Activated CD4-positive, alpha-beta memory T cell treated with anti-CD3 and anti-CD28 coated beads for 36 hours (primary cell): ENCODE measurements at regions of chr13 and their contacts with region 1.

Region 1: DNA sequence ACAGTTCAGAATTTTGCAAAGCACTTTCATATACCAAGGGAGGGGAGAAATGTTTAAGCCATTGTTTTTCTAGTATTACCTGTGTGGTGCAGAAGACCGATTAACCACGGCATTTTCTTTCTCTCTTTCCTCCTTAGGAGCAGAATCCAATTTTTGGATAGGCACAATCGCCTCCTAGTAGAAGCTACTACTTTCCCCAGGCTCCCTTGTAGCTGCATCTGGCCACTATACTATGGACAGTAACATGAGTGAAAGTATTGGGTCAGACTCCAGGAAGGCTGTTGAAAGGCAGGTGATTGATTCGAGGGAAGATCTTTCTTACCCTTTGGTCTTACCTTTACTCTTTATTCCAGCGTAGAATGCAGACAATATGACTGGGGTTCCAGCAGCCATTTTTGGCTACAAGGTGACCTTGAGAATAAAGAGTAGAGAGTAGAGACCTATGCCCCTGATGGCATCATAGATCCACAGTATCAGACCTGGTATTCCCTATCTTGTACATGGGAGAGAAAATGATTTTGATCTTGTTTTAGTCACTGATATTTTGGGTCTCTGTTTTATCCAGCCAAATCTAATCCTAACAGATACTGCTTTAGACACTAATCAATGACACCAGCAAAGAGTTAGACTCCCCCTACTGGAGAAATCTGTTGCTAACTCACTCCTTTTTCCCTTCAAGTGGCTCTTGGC is 77.0 kb downstream of the LRRC63 start:
- DNase-seq: no peak
- H3K4me3 Mint-ChIP-seq: no peak overlapping the region
- H3K27ac Mint-ChIP-seq: no peak overlapping the region
- H3K4me1 Mint-ChIP-seq: peaks cover 22% of the 10 kb centered on the region
- H3K27me3 Mint-ChIP-seq: no peaks in the 10 kb centered on the region

Region 2: DNA sequence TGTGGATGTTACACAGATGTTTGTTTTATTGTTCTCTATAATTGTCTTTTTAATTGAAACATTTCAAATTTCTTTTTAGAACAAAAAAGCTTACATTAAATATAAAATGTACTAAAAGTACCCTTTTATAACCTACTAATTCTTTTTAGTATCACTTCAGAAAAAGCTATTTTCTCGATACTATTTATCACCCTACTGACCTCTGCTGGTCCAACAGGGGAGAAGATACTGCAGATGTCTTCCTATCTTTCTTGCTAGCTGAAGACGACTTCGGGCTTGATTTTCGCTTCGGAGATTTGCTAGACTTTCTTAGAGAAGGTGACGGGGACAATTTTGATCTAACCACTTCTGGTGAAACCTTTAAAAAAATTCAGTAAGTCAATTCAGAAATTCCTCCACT is 278.6 kb before region 1 on chr13:
- CTCF ChIA-PET with region 1: no interaction called
- POLR2A ChIA-PET with region 1: no interaction called
- intact Hi-C with region 1: no loop called
- DNase-seq: no peak
- H3K4me3 Mint-ChIP-seq: no peak overlapping the region
- H3K27ac Mint-ChIP-seq: no peak overlapping the region
- H3K4me1 Mint-ChIP-seq: no peaks in the 10 kb centered on the region
- H3K27me3 Mint-ChIP-seq: no peaks in the 10 kb centered on the region

Region 3: DNA sequence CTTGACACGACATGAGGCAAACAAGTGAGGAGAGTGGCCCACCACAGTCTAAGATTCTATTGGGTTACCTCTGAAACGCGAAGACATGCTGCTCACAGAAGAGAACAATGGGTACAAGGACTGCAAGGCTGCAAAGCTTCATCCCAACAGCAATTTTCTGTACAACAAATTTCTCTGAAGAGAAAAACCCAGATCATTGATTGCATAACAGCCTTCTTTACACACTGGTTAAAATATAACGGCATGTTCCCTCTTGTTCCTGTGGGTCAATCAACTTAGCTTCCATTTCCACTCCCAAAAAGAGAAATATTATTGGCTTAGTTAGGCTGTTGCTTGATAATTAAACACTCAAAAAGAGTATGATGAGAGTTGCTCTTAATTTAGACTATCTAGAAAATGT is 183.8 kb before region 1 on chr13 and contains the start of gene CPB2:
- CTCF ChIA-PET with region 1: no interaction called
- POLR2A ChIA-PET with region 1: no interaction called
- intact Hi-C with region 1: no loop called
- DNase-seq: no peak
- H3K4me3 Mint-ChIP-seq: no peak within 1 kb of the TSS
- H3K27ac Mint-ChIP-seq: no peak within 1 kb of the TSS
- H3K4me1 Mint-ChIP-seq: peaks cover 7% of the 10 kb centered on the region
- H3K27me3 Mint-ChIP-seq: peaks cover 7% of the 10 kb centered on the region
- total RNA-seq, gene CPB2: not detected

Region 4: GRCh38 chr13:46211483-46212351 is 77.0 kb before region 1 on chr13 and contains the start of gene LRRC63:
- CTCF ChIA-PET with region 1: no interaction called
- POLR2A ChIA-PET with region 1: no interaction called
- intact Hi-C with region 1: loop called (anchors 2 kb)
- DNase-seq: peak; percentile 89
- H3K4me3 Mint-ChIP-seq: peak within 1 kb of the TSS; percentile 85
- H3K27ac Mint-ChIP-seq: peak within 1 kb of the TSS; percentile 74
- H3K4me1 Mint-ChIP-seq: peaks cover 21% of the 10 kb centered on the region
- H3K27me3 Mint-ChIP-seq: no peaks in the 10 kb centered on the region
- total RNA-seq, gene LRRC63: 0.45 to 0.63 TPM

Region 5: GRCh38 chr13:46278474-46278873 is 10.2 kb before region 1 on chr13:
- CTCF ChIA-PET with region 1: interaction called, 10 read pairs
- POLR2A ChIA-PET with region 1: no interaction called
- intact Hi-C with region 1: no loop called
- DNase-seq: no peak
- H3K4me3 Mint-ChIP-seq: no peak overlapping the region
- H3K27ac Mint-ChIP-seq: no peak overlapping the region
- H3K4me1 Mint-ChIP-seq: no peaks in the 10 kb centered on the region
- H3K27me3 Mint-ChIP-seq: peaks cover 1% of the 10 kb centered on the region

Region 6: DNA sequence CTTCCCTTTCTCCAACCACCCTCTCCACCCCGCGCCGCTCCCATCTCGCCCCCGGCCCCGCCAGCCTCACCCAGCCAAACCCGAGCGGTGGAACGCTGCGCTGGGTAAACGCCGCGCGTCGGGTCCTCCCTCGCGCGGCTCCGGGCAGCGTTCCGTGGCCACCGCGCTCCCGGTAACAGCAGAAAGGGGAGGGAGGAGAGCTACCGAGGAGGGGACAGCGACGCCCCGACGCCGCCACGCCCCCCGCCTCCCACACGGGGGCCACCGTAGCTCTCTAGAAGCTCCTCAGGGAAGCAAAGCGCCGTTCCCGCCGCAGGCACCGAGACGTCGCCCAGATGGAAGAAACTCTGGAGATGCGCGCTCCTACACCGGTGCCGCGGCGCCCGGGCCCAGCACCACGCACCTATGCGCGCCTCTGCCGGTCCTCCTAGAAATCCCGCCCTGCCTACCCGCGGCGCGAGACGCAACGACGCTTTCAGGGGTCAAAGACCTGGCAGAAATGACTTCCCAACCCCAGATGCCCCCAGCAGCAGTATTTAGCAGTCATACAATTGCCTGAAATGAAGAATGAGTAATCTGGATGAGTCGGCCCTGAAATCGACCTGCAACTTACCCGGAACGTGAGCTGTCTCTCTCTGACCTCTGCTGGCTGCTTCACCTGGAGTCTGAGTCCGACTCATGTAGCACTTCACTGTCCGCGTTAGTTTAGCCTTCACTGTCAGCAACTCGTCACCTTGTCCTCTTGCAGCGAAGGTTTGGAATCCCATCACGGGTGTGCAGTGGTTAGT is 98.5 kb after region 1 on chr13 and contains the start of gene RUBCNL:
- CTCF ChIA-PET with region 1: no interaction called
- POLR2A ChIA-PET with region 1: no interaction called
- intact Hi-C with region 1: no loop called
- DNase-seq: peak; percentile 65
- H3K4me3 Mint-ChIP-seq: peak within 1 kb of the TSS; percentile 76
- H3K27ac Mint-ChIP-seq: no peak within 1 kb of the TSS
- H3K4me1 Mint-ChIP-seq: peaks cover 25% of the 10 kb centered on the region
- H3K27me3 Mint-ChIP-seq: peaks cover 37% of the 10 kb centered on the region
- total RNA-seq, gene RUBCNL: 0.73 to 0.74 TPM